Psoas muscle (tissue), 8 donors: ENCODE measurements at regions of chr11 and their contacts with region 1.

Region 1: DNA sequence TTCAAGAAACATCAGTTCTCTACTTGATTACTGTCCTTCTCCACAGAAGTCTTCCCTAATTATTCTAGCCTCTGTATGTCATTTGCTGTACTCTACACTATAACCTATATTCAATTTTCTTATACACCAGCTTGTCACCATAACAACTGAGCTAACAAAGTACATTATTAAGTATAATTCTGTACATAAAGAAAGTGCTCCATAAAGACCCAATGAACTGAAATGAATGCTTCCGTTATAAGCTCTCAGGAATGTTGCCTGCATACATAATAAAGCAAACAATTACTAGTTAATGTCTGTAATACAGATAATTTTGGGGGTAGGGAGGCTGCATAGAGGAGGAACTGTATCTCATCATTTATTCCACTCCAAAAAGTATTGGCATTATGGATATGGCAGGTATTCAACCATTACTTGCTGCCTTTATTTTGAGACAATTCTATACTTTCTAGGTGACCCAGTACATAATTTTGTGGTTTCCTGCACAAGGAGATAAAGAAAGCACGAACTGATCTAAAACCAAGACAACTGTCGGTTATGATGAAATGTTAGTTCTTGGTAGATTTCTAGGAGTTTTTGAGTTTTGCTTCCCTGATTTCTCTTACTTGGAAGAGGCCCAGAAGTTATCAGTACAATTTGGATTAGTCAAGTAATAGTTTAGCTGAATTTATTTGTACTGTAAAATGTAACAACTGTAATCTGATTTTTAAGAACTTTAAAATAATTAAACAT is 202.5 kb downstream of the SBF2 start:
- DNase-seq: no peak
- ATAC-seq: no peak
- H3K4me3 ChIP-seq: no peak overlapping the region
- H3K27ac ChIP-seq: no peak overlapping the region
- H3K4me1 ChIP-seq: no peaks in the 10 kb centered on the region
- H3K27me3 ChIP-seq: no peaks in the 10 kb centered on the region
- CTCF ChIP-seq: no peak

Region 2: GRCh38 chr11:10004526-10005113 is 86.9 kb before region 1 on chr11:
- intact Hi-C with region 1: loop called in 1 of 2 experiments (anchors 10 kb)
- DNase-seq: no peak
- ATAC-seq: no peak
- H3K4me3 ChIP-seq: no peak overlapping the region
- H3K27ac ChIP-seq: no peak overlapping the region
- H3K4me1 ChIP-seq: no peaks in the 10 kb centered on the region
- H3K27me3 ChIP-seq: no peaks in the 10 kb centered on the region
- CTCF ChIP-seq: no peak

Region 3: GRCh38 chr11:10155793-10156490 is 64.5 kb after region 1 on chr11:
- intact Hi-C with region 1: no loop called
- DNase-seq: no peak
- ATAC-seq: no peak
- H3K4me3 ChIP-seq: no peak overlapping the region
- H3K27ac ChIP-seq: no peak overlapping the region
- H3K4me1 ChIP-seq: no peaks in the 10 kb centered on the region
- H3K27me3 ChIP-seq: no peaks in the 10 kb centered on the region
- CTCF ChIP-seq: no peak

Region 4: GRCh38 chr11:10181811-10182210 is 90.3 kb after region 1 on chr11:
- intact Hi-C with region 1: no loop called
- DNase-seq: no peak
- ATAC-seq: no peak
- H3K4me3 ChIP-seq: no peak overlapping the region
- H3K27ac ChIP-seq: no peak overlapping the region
- H3K4me1 ChIP-seq: no peaks in the 10 kb centered on the region
- H3K27me3 ChIP-seq: no peaks in the 10 kb centered on the region
- CTCF ChIP-seq: no peak